A549 (cell line): ENCODE measurements at regions of chr1 and their contacts with region 1.

Region 1: GRCh38 chr1:16960560-16961296 is 19.7 kb downstream of the MFAP2 start:
- DNase-seq: peak; percentile 41 to 87
- ATAC-seq: peak; percentile 92 to 98
- H3K4me3 ChIP-seq: peak overlapping the region; percentile 50
- H3K27ac ChIP-seq: peak overlapping the region; percentile 84 to 99
- H3K4me1 ChIP-seq: peaks cover 13% of the 10 kb centered on the region
- CTCF ChIP-seq: peak; percentile 66
- EP300 ChIP-seq: no peak
- POLR2A ChIP-seq: peak; percentile 46
- RAD21 ChIP-seq: peak; percentile 20 to 49; a peak in 3 of 5 replicates

Region 2: GRCh38 chr1:16888860-16889816 is 71.6 kb before region 1 on chr1:
- CTCF ChIA-PET with region 1: no interaction called
- POLR2A ChIA-PET with region 1: no interaction called
- DNase-seq: peak; percentile 43 to 85
- ATAC-seq: peak; percentile 95 to 97
- H3K4me3 ChIP-seq: peak overlapping the region; percentile 49
- H3K27ac ChIP-seq: peak overlapping the region; percentile 87 to 89
- H3K4me1 ChIP-seq: peaks cover 5% of the 10 kb centered on the region; the same call in 2 of the 3 replicates
- CTCF ChIP-seq: no peak; the same call in 2 of the 3 replicates
- EP300 ChIP-seq: no peak
- POLR2A ChIP-seq: peak; percentile 39
- RAD21 ChIP-seq: peak; percentile 9 to 25; a peak in 1 of 5 replicates

Region 3: GRCh38 chr1:16946646-16947045 is 14.1 kb before region 1 on chr1:
- CTCF ChIA-PET with region 1: interaction called, 62 read pairs
- POLR2A ChIA-PET with region 1: interaction called, 5 read pairs
- DNase-seq: no peak
- ATAC-seq: no peak
- H3K4me3 ChIP-seq: no peak overlapping the region
- H3K27ac ChIP-seq: no peak overlapping the region
- H3K4me1 ChIP-seq: no peaks in the 10 kb centered on the region
- CTCF ChIP-seq: no peak
- EP300 ChIP-seq: no peak
- POLR2A ChIP-seq: no peak
- RAD21 ChIP-seq: no peak

Region 4: GRCh38 chr1:16986596-16987361 is 26.1 kb after region 1 on chr1:
- CTCF ChIA-PET with region 1: interaction called, 12 read pairs
- POLR2A ChIA-PET with region 1: interaction called, 3 read pairs
- DNase-seq: peak in 1 of 2 experiments; percentile 35
- ATAC-seq: peak; percentile 67 to 86; a peak in 5 of 6 replicates
- H3K4me3 ChIP-seq: no peak overlapping the region
- H3K27ac ChIP-seq: no peak overlapping the region
- H3K4me1 ChIP-seq: peaks cover 4% of the 10 kb centered on the region; the same call in 1 of the 3 replicates
- CTCF ChIP-seq: peak; percentile 35
- EP300 ChIP-seq: no peak
- POLR2A ChIP-seq: no peak
- RAD21 ChIP-seq: no peak

Region 5: DNA sequence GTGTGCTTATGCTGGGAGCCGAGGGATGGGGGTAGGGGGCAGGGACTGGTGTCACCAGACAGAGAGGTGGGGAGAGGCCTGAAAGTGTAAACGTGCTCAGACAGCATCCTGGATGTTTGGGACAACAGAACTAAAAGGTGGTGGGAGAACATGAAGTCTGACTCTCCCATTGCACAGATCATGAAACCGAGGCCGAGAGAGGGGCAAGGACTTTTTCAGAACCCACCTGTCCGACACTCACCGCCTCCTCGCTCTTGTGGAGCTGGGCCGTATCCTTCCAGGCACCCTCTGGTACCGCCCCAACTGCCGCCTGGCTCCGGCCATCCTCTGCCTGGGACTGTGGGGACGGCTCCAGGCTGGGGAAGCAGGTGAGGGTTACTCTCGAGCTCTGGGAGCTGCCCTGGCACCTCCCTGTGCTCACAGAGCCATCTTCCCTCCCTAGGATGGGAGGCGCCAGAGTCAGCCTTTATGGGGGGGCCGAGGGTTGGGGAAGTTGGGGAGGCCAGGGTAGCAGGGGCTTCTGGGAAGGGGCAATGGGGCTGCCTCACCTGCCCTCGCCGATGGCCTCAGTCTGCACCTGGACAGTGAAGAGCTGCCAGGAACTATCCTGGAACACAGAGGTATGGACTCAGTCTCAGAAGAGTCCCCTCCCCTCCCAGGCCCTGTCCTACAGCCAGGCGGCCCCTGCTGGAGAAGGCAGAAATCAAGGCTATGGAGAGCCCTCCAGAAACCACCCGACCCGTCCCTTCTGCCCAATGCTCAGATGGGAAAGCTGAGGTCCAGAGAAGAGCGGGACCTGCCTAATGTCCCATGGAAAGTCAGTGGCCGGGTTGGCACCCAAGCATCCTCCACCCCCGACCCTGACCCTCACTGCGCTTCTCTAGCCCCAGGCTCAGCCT is 44.0 kb after region 1 on chr1:
- CTCF ChIA-PET with region 1: interaction called, 10 read pairs
- POLR2A ChIA-PET with region 1: interaction called, 4 read pairs
- DNase-seq: peak in 1 of 2 experiments; percentile 29
- ATAC-seq: peak; percentile 69
- H3K4me3 ChIP-seq: no peak overlapping the region
- H3K27ac ChIP-seq: peak overlapping the region; percentile 71 to 84
- H3K4me1 ChIP-seq: peaks cover 21% of the 10 kb centered on the region
- CTCF ChIP-seq: peak; percentile 14; the same call in 1 of the 3 replicates
- EP300 ChIP-seq: no peak
- POLR2A ChIP-seq: no peak
- RAD21 ChIP-seq: no peak; a peak in 1 of 5 replicates

Region 6: DNA sequence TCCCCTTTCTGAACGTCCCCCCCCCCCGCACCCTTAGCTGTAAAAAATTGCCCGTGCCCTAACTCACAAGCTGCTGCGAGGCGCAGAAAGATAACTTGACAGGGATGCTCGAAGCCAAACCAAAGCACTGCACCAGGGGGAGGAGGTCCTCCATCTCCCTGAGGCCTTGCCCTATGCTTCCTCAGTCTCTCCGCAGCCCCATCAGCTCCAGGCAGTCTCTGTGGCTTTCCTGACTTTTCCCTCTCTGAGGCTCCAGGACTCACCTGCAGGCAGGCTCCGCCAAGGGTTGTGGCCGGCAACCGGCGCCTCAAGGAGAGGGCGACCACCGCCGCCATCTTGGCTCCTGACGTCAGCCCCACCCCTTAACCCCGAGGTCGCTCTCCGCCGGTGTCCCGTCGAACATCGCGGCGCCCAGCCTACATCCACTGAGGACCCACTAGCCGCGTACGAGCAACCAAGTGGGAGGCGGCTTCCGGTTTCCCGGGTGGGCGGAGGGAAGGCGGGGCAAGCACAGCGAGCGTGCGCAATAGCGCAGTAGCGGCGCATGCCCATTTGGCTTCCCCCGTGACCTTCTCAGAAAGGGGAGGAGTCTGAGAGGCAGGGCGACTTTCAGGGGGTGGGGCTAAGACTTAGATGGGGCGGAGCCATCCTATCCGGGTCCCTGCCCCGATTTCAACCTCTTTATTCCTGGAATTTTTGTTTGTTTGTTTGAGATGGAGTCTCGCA is 93.1 kb after region 1 on chr1 and contains the start of gene SDHB:
- CTCF ChIA-PET with region 1: interaction called, 54 read pairs
- POLR2A ChIA-PET with region 1: interaction called, 10 read pairs
- DNase-seq: peak; percentile 93 to 97
- ATAC-seq: peak; percentile 99
- H3K4me3 ChIP-seq: peak within 1 kb of the TSS; percentile 72
- H3K27ac ChIP-seq: peak within 1 kb of the TSS; percentile 78 to 95
- H3K4me1 ChIP-seq: peaks cover 17% of the 10 kb centered on the region
- CTCF ChIP-seq: no peak
- EP300 ChIP-seq: no peak
- POLR2A ChIP-seq: peak; percentile 79
- RAD21 ChIP-seq: no peak
- polyA plus RNA-seq, gene SDHB: 262 and 343 TPM in 2 replicates

Region 7: GRCh38 chr1:17119076-17119772 is 158.5 kb after region 1 on chr1 and contains the start of gene PADI2:
- CTCF ChIA-PET with region 1: no interaction called
- POLR2A ChIA-PET with region 1: no interaction called
- DNase-seq: peak; percentile 43 to 77
- ATAC-seq: peak; percentile 94 to 95
- H3K4me3 ChIP-seq: peak within 1 kb of the TSS; percentile 52
- H3K27ac ChIP-seq: peak within 1 kb of the TSS; percentile 50 to 76; a peak in 4 of 6 replicates
- H3K4me1 ChIP-seq: peaks cover 22% of the 10 kb centered on the region
- CTCF ChIP-seq: no peak
- EP300 ChIP-seq: no peak
- POLR2A ChIP-seq: peak; percentile 32
- RAD21 ChIP-seq: no peak
- polyA plus RNA-seq, gene PADI2: 1.3 and 1.6 TPM in 2 replicates

Region 8: DNA sequence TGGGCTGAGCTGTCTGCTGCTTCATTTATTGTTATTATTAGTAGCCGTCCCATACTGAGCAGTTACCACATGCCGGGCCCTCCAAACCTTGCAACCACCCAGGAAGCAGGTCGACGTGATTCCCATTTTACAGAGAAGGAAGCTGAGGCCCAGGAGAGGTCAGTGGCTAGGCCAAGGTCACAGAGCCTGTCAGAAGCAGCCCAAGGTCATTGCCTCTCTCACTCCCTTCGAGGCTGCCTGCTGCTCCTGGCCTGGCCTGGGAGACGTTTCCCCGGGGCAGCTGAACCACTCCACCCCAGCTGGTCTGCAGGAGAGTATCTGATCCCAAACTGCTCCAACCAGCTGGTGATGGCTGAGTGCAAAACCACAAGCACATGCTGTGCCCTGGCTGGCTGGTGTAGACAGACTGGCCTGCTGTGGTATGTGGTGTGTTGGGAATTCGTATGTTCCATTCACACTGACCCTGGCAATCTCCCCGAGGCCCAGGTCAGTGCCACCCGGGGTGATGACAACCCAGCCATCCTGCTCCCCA is 353.8 kb after region 1 on chr1:
- CTCF ChIA-PET with region 1: no interaction called
- POLR2A ChIA-PET with region 1: no interaction called
- DNase-seq: no peak
- ATAC-seq: no peak
- H3K4me3 ChIP-seq: no peak overlapping the region
- H3K27ac ChIP-seq: no peak overlapping the region; a peak in 1 of 6 replicates
- H3K4me1 ChIP-seq: peaks cover under 1% of the 10 kb centered on the region; the same call in 1 of the 3 replicates
- CTCF ChIP-seq: no peak
- EP300 ChIP-seq: no peak
- POLR2A ChIP-seq: no peak
- RAD21 ChIP-seq: no peak